Activated T-helper 2 cell treated with anti-CD3 and anti-CD28 coated beads, Interferon-gamma antibody, Interleukin-2, Interleukin-4, amounts not matched to agents 10 μg/mL and 5 μg/mL and 100 μg/mL, durations not matched to agents 14 hours and 24 hours and 36 hours (primary cell): ENCODE measurements at regions of chr13 and their contacts with region 1.

Region 1: GRCh38 chr13:74575729-74576125 is 441.5 kb upstream of the KLF12 start:
- DNase-seq: peak; percentile 22
- H3K4me3 Mint-ChIP-seq: peak overlapping the region; percentile 26
- H3K27ac Mint-ChIP-seq: no peak overlapping the region
- H3K4me1 Mint-ChIP-seq: no peaks in the 10 kb centered on the region
- H3K27me3 Mint-ChIP-seq: peaks cover 40% of the 10 kb centered on the region

Region 2: GRCh38 chr13:75219479-75220237 is 643.9 kb after region 1 on chr13:
- intact Hi-C with region 1: loop called (anchors 10 kb)
- DNase-seq: peak; percentile 75
- H3K4me3 Mint-ChIP-seq: peak overlapping the region; percentile 49
- H3K27ac Mint-ChIP-seq: peak overlapping the region; percentile 34
- H3K4me1 Mint-ChIP-seq: peaks cover 6% of the 10 kb centered on the region
- H3K27me3 Mint-ChIP-seq: peaks cover 45% of the 10 kb centered on the region